Stomach (tissue), 19 donors: ENCODE measurements at regions of chr3 and their contacts with region 1.

Region 1: DNA sequence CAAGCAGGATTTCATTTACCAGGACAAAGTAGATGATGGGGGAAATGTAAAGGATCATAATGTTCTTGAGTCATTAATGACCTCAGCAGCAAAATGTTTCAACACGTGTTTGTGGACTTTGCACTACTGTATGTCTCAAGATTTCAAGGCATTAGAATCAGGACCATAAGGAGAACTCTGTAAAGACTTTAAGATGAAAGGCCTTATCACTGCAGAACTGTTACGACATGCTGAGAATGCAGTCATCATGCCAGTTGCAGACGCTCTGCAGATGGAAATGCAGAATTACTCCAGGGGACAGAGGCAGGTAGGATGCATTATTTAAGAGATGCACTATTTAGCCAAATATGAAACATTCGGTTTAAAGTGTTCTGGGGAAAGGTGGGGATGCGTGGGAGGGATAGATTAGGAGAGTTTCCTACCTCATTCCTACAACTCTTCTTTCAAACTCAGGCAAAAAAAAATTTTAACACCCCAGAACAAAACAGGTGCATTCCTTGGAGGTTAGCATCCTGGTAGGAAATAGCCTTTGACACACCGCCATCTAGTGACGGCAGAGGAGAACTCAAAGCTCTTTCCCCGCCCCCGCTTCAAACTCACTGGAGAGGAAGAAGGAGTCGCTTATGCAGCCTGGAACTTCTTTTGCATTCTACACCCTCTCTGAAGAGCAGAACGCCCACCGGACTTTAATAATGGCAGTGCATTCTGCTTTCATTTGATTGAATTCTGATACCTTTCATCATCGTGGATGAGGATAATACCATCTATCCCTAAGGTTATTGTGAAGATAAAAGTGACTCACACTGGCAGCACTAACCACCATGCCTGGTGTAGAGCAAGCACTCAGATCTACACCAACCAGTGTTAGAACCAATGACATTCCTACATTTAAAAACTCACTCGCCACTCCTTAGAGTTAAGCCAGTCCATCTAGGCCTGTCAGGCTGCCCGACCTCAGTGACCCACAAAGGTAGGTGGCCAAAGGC is 43.1 kb upstream of the TOPAZ1 start:
- DNase-seq: peak; percentile 72 to 90
- H3K4me3 ChIP-seq: no peak overlapping the region
- H3K27ac ChIP-seq: no peak overlapping the region
- H3K4me1 ChIP-seq: no peaks in the 10 kb centered on the region
- H3K27me3 ChIP-seq: peaks cover 0 to 14% (median 0%) of the 10 kb centered on the region in 3 donors
- CTCF ChIP-seq: peak in 5 of 7 experiments; percentile 68 to 79 (median 72)
- EP300 ChIP-seq: no peak
- POLR2A ChIP-seq: no peak

Region 2: DNA sequence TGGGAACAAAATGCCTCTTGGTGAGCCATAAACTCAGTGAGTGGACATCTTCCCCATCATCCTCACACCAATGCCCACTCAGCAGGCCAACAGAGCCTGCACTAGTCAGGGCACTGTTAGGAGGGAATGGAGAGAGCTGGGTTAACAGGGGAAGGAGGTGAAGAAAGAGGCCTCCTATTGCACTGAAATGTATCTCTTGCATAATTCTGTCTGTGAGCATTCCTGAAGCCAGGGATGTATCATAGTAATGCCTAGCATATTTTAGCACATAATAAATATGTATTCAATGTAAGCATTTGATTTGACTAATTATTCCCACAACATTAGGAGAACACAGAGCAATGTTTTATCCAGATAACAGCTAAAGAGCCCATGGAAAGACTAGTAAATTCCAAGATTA is 658.0 kb before region 1 on chr3:
- intact Hi-C with region 1: loop called (anchors 10 kb)
- DNase-seq: no peak
- H3K4me3 ChIP-seq: no peak overlapping the region
- H3K27ac ChIP-seq: no peak overlapping the region
- H3K4me1 ChIP-seq: no peaks in the 10 kb centered on the region
- H3K27me3 ChIP-seq: no peaks in the 10 kb centered on the region
- CTCF ChIP-seq: no peak
- EP300 ChIP-seq: no peak
- POLR2A ChIP-seq: no peak